ENCODE measurements at regions of chr6 and their contacts with region 1.

Region 1: GRCh38 chr6:138588805-138589434 is 89.6 kb upstream of the NHSL1 start:
- DNase-seq: peak; percentile 84
- H3K4me3 Mint-ChIP-seq: no peak overlapping the region
- H3K27ac Mint-ChIP-seq: no peak overlapping the region
- H3K4me1 Mint-ChIP-seq: peaks cover 31% of the 10 kb centered on the region
- H3K27me3 Mint-ChIP-seq: no peaks in the 10 kb centered on the region
- CTCF ChIP-seq: peak; percentile 82

Region 2: DNA sequence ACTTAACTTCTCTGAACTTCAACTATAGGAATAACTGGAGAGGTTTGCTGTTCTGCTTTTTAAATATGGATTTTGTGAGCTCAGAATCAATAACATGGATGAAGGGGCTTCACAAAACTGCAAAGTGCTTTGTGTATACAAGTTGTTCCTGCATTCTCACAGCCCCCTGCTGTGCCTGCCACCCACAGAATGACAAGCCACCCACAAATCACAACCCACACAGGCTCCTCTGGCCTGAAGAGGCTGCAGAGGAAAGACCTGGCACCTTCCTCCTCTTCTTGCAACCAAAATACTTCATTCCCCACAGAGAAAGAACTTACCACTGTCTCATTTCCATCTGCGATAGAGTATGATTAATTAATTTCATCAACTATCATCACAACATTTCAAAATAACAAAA is 17.0 kb after region 1 on chr6:
- CTCF ChIA-PET with region 1: interaction called, 20 read pairs
- POLR2A ChIA-PET with region 1: interaction called, 5 read pairs
- intact Hi-C with region 1: no loop called
- DNase-seq: no peak
- H3K4me3 Mint-ChIP-seq: no peak overlapping the region
- H3K27ac Mint-ChIP-seq: no peak overlapping the region
- H3K4me1 Mint-ChIP-seq: peaks cover 22% of the 10 kb centered on the region
- H3K27me3 Mint-ChIP-seq: no peaks in the 10 kb centered on the region
- CTCF ChIP-seq: no peak

Region 3: GRCh38 chr6:138682704-138683527 is 94.0 kb after region 1 on chr6:
- CTCF ChIA-PET with region 1: interaction called, 8 read pairs
- POLR2A ChIA-PET with region 1: interaction called, 11 read pairs
- intact Hi-C with region 1: no loop called
- DNase-seq: peak; percentile 86
- H3K4me3 Mint-ChIP-seq: peak overlapping the region; percentile 72
- H3K27ac Mint-ChIP-seq: peak overlapping the region; percentile 98
- H3K4me1 Mint-ChIP-seq: peaks cover 5% of the 10 kb centered on the region
- H3K27me3 Mint-ChIP-seq: no peaks in the 10 kb centered on the region
- CTCF ChIP-seq: no peak

Region 4: GRCh38 chr6:138765896-138766655 is 177.2 kb after region 1 on chr6:
- CTCF ChIA-PET with region 1: interaction called, 153 read pairs
- POLR2A ChIA-PET with region 1: interaction called, 5 read pairs
- intact Hi-C with region 1: loop called (anchors 1 kb)
- DNase-seq: peak; percentile 47
- H3K4me3 Mint-ChIP-seq: no peak overlapping the region
- H3K27ac Mint-ChIP-seq: no peak overlapping the region
- H3K4me1 Mint-ChIP-seq: no peaks in the 10 kb centered on the region
- H3K27me3 Mint-ChIP-seq: no peaks in the 10 kb centered on the region
- CTCF ChIP-seq: peak; percentile 43

Region 5: GRCh38 chr6:139109558-139109957 is 520.6 kb after region 1 on chr6:
- CTCF ChIA-PET with region 1: no interaction called
- POLR2A ChIA-PET with region 1: no interaction called
- intact Hi-C with region 1: no loop called
- DNase-seq: peak; percentile 33
- H3K4me3 Mint-ChIP-seq: no peak overlapping the region
- H3K27ac Mint-ChIP-seq: no peak overlapping the region
- H3K4me1 Mint-ChIP-seq: no peaks in the 10 kb centered on the region
- H3K27me3 Mint-ChIP-seq: no peaks in the 10 kb centered on the region
- CTCF ChIP-seq: no peak

Region 6: DNA sequence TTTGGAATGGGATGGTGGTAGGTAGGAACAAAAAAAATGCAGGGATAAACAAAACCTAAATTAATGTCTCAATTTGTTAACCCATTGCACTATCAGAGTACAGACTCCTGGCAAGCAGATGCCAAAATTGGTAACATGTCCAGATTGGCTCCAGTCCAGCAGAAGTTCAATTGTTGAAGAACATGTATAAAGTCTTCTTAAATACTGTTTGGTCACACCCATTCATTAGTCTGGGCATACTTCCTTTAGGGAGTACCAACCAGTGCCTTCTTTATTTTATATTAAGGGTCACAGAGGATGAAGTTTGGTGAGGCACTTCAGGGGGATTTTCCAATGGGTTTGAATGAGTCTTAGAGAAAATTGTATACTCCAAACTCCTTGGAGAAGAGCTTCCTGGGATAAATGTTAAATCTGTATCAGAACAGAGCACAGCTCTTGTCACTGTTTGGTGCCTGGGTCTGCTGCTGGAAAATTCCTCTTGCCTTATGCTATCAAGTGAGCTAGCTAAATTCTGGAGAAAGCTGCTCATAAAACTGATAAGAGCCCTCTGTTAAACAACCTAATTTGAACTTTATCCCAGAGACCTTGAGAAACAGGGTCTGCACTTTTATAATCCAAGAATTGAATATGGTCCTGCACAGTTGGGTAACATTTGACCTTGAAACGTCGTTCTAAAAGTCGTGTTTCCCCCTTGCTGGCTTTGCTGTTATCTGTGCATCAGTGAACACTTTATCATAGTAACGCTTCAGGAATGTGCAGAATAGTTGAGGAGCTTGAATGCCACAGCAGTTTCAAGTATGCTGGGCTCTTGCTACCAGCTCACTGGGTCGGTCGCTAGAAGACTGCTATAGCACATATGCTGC is 1119.6 kb after region 1 on chr6:
- CTCF ChIA-PET with region 1: no interaction called
- POLR2A ChIA-PET with region 1: no interaction called
- intact Hi-C with region 1: no loop called
- DNase-seq: no peak
- H3K4me3 Mint-ChIP-seq: no peak overlapping the region
- H3K27ac Mint-ChIP-seq: no peak overlapping the region
- H3K4me1 Mint-ChIP-seq: peaks cover 18% of the 10 kb centered on the region
- H3K27me3 Mint-ChIP-seq: no peaks in the 10 kb centered on the region
- CTCF ChIP-seq: no peak